Heart left ventricle (tissue), 16 donors: ENCODE measurements at regions of chr7 and their contacts with region 1.

Region 1: GRCh38 chr7:152006336-152006735 is 19.1 kb upstream of the GALNT11 start:
- DNase-seq: no peak
- ATAC-seq: no peak
- H3K4me3 ChIP-seq: no peak overlapping the region
- H3K27ac ChIP-seq: no peak overlapping the region
- H3K4me1 ChIP-seq: no peaks in the 10 kb centered on the region
- H3K27me3 ChIP-seq: no peaks in the 10 kb centered on the region
- CTCF ChIP-seq: no peak
- POLR2A ChIP-seq: no peak

Region 2: DNA sequence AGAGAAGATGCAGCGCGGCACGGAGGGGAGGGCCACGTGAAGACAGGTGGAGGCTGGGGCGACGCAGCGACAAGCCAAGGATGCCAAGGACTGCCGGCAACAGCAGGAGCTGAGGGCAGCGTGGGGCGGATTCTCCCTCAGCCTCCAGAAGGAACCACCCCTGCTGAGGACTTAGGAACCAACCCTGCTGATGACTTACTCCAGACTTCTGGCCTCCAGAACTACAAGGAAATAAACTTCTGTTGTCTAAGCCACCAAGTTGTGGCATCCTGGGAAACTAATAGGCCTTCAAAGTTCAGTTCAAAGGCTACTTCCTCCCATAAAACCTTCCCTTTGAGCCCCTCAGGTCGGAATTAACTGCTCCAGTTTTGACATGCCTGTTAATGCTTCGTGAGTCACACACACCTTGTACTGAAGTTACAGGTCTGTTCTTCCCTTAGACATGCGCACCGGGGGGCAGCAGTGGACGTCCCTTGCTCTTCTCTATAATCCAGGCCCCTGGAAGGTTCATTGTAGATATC is 398.2 kb before region 1 on chr7:
- intact Hi-C with region 1: no loop called
- DNase-seq: no peak
- ATAC-seq: peak in 2 of 4 donors; percentile 14 to 36
- H3K4me3 ChIP-seq: no peak overlapping the region
- H3K27ac ChIP-seq: no peak overlapping the region
- H3K4me1 ChIP-seq: peaks cover 0 to 15% (median 1%) of the 10 kb centered on the region in 12 donors
- H3K27me3 ChIP-seq: no peaks in the 10 kb centered on the region
- CTCF ChIP-seq: no peak
- POLR2A ChIP-seq: no peak

Region 3: GRCh38 chr7:151984606-151985005 is 21.7 kb before region 1 on chr7:
- intact Hi-C with region 1: loop called in 1 of 10 experiments (anchors 2 kb)
- DNase-seq: no peak
- ATAC-seq: no peak
- H3K4me3 ChIP-seq: no peak overlapping the region
- H3K27ac ChIP-seq: no peak overlapping the region
- H3K4me1 ChIP-seq: peaks cover 0 to 12% (median 0%) of the 10 kb centered on the region in 12 donors
- H3K27me3 ChIP-seq: no peaks in the 10 kb centered on the region
- CTCF ChIP-seq: no peak
- POLR2A ChIP-seq: no peak

Region 4: GRCh38 chr7:152512706-152513105 is 506.4 kb after region 1 on chr7:
- intact Hi-C with region 1: no loop called
- DNase-seq: no peak
- ATAC-seq: no peak
- H3K4me3 ChIP-seq: peak overlapping the region in 1 of 12 donors; percentile 15
- H3K27ac ChIP-seq: no peak overlapping the region
- H3K4me1 ChIP-seq: no peaks in the 10 kb centered on the region
- H3K27me3 ChIP-seq: no peaks in the 10 kb centered on the region
- CTCF ChIP-seq: no peak
- POLR2A ChIP-seq: no peak